ENCODE measurements at regions of chr6 and their contacts with region 1.

Region 1: DNA sequence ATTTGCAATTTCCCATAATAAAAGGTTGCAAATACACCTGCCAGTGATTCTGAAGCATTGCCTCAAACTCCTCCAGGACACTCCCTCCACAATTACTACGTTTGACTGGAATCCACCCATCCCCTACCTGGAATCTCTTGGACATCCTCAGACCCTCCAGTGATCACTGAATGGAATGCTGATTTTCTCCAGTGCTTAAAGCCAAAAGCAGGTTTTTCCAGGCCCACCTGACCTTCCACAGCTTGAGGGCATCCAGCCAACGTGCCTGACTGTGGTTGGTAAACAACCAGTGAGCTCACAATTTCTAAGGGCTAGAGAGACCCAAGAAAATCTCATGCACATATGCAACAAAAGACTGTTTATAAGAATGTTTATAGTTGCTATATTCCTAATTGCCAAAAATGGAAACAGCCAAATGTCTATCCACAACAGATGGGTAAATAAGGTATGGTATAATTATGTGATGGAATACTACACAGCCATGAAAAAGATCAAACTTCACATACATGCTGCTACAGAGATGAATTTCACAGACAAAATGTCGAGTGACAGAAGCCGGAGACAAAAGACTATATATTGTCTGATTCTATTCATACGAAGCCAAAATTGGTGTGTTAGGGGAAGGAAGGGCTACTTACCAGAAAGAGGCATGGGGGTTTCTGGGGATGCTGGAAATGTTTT is 147.1 kb upstream of the RREB1 start:
- DNase-seq: no peak
- H3K4me3 ChIP-seq: no peak overlapping the region
- H3K27ac ChIP-seq: no peak overlapping the region
- H3K4me1 ChIP-seq: no peaks in the 10 kb centered on the region
- H3K27me3 ChIP-seq: no peaks in the 10 kb centered on the region
- CTCF ChIP-seq: no peak
- EP300 ChIP-seq: no peak
- POLR2A ChIP-seq: no peak

Region 2: GRCh38 chr6:6781172-6781871 is 179.4 kb before region 1 on chr6:
- intact Hi-C with region 1: no loop called
- DNase-seq: peak; percentile 68 to 85 (median 79)
- H3K4me3 ChIP-seq: no peak overlapping the region
- H3K27ac ChIP-seq: peak overlapping the region in 1 of 2 donors; percentile 33
- H3K4me1 ChIP-seq: peaks cover 9% of the 10 kb centered on the region
- H3K27me3 ChIP-seq: no peaks in the 10 kb centered on the region
- CTCF ChIP-seq: no peak
- EP300 ChIP-seq: no peak
- POLR2A ChIP-seq: no peak

Region 3: GRCh38 chr6:7006515-7007191 is 45.9 kb after region 1 on chr6:
- intact Hi-C with region 1: loop called in 1 of 4 experiments (anchors 2 kb)
- DNase-seq: no peak
- H3K4me3 ChIP-seq: no peak overlapping the region
- H3K27ac ChIP-seq: no peak overlapping the region
- H3K4me1 ChIP-seq: no peaks in the 10 kb centered on the region
- H3K27me3 ChIP-seq: no peaks in the 10 kb centered on the region
- CTCF ChIP-seq: no peak
- EP300 ChIP-seq: no peak
- POLR2A ChIP-seq: no peak